BJ (cell line): ENCODE measurements at regions of chr12 and their contacts with region 1.

Region 1: DNA sequence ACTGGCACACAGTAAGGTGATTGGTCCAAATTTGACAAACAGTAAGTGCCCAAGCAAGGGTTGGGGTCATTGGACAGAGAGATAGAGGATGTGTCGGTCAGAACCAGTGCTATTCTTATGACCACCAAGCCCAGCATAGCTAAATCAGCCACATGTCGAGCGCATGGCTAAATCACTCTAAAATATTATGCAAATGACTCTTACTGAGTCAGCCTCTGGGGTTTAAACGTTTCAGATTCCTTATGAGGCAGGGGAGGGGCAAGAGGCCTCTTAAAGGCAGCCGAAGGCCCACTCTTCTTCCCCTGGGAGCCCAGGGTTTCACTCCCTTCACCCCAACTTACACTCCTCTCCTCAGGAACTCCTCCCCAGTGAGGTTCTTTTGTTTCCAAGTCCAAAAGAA is 603 bp upstream of the ENDOU start:
- DNase-seq: no peak
- H3K4me3 ChIP-seq: no peak overlapping the region
- H3K27me3 ChIP-seq: no peaks in the 10 kb centered on the region
- CTCF ChIP-seq: no peak

Region 2: GRCh38 chr12:47576289-47576945 is 149.5 kb before region 1 on chr12:
- CTCF ChIA-PET with region 1: no interaction called
- POLR2A ChIA-PET with region 1: no interaction called
- DNase-seq: no peak
- H3K4me3 ChIP-seq: no peak overlapping the region
- H3K27me3 ChIP-seq: no peaks in the 10 kb centered on the region
- CTCF ChIP-seq: no peak

Region 3: GRCh38 chr12:47715393-47715876 is 10.5 kb before region 1 on chr12:
- CTCF ChIA-PET with region 1: interaction called, 41 read pairs
- POLR2A ChIA-PET with region 1: no interaction called
- DNase-seq: no peak
- H3K4me3 ChIP-seq: no peak overlapping the region
- H3K27me3 ChIP-seq: no peaks in the 10 kb centered on the region
- CTCF ChIP-seq: peak; percentile 80

Region 4: DNA sequence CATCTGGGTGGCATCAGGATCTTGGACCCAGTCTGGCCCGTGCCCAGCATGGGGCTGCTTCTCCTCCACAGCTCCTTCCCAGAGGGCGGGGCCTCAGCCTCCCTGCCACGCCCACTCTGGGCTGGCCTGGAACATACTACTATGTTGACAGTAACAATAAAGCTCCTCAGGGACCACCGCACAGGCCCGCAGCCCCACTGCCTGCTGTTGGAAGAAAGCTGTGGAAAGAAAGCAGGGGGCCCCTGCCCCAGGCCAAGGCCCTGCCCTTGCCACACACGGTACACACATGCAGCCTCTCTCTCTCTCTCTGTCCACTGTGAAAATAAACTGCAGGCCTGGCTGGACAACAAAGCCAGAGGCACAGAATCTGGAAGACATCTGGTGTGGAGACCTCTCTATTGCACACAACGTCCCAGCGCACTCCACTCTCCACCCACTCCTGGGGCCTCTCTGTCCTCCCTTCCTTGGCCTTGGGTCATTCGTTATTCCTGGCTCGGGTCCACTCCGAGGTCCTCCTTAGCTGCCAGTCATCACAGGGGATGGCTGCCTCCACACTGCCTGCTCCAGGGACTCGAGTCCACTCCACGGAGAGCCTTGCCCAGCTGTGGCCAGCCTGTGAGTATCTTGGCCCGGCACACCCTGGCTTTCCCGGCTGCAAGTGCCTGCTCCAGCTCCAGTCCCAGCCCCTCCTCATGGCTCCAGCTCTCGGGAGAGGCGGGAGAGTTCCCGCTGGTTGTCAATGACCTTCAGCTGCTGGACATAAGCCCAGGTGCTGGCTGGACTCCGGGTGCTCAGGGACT is 11.2 kb after region 1 on chr12:
- CTCF ChIA-PET with region 1: interaction called, 77 read pairs
- POLR2A ChIA-PET with region 1: no interaction called
- DNase-seq: no peak
- H3K4me3 ChIP-seq: no peak overlapping the region
- H3K27me3 ChIP-seq: peaks cover 3% of the 10 kb centered on the region; the same call in 1 of the 2 replicates
- CTCF ChIP-seq: no peak

Region 5: DNA sequence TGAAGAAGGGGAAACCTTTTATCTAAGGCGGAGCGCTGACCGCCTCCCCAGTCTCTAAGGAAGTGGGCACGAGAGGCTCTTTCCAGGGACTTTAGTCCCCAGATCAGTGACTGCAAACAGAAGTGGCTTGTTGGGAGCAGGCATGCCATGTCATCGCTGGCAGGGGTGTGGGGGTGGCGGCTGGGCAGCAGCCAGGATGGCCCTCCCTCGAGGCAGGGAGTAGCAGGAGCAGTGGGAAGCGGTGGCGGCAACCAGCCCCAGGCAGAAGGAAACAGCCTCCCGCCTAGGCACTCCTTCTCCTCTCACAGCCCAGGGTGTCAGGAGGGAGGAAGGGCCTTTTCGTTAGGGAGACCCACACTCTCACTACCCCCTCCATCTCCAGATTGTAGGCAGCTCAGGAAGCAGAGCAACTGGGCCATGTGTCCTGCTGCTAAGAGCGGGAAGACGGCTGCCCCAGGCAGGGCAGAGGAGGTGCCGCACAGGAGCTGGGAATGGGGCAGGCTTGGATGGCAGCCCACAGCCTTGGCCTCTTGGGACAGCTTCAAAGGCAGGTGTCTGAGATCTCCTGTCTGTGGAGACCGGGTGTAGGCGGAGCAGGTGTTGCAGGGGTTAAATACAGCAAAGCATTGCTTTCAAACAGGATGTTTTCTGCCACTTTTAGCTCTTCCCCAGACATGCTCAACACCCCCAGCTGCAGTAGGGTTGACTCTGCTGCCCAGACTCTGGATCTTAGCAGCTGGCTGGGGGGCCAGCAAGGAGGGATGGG is 157.1 kb after region 1 on chr12:
- CTCF ChIA-PET with region 1: no interaction called
- POLR2A ChIA-PET with region 1: no interaction called
- DNase-seq: no peak
- H3K4me3 ChIP-seq: no peak overlapping the region
- H3K27me3 ChIP-seq: no peaks in the 10 kb centered on the region
- CTCF ChIP-seq: no peak